ENCODE measurements at regions of chrX and their contacts with region 1.

Region 1: GRCh38 chrX:9995855-9996339 is 28.7 kb downstream of the CLDN34 start:
- DNase-seq: peak; percentile 92
- ATAC-seq: peak; percentile 90

Region 2: DNA sequence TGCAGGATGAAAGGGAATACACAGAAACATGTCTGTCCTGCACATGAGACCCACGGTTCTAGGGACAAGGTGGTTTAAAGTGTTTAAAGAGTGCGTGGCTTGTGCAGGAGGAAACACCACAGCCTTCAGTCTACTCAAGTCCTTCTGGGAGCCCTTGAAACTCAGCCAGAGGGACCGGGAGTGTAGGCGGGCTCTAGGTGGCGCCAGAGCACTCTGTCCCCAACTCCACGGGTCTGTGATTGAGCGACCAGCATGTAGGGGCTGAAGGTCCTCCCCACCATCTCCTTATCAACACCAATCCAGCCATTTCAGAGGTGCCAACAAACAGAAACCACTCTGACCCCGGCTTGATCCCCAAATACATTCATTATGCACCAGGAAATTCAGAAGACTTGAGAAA is 110.7 kb before region 1 on chrX:
- intact Hi-C with region 1: loop called (anchors 10 kb)
- DNase-seq: no peak
- ATAC-seq: peak; percentile 72